H1 (cell line): ENCODE measurements at regions of chr6 and their contacts with region 1.

Region 1: DNA sequence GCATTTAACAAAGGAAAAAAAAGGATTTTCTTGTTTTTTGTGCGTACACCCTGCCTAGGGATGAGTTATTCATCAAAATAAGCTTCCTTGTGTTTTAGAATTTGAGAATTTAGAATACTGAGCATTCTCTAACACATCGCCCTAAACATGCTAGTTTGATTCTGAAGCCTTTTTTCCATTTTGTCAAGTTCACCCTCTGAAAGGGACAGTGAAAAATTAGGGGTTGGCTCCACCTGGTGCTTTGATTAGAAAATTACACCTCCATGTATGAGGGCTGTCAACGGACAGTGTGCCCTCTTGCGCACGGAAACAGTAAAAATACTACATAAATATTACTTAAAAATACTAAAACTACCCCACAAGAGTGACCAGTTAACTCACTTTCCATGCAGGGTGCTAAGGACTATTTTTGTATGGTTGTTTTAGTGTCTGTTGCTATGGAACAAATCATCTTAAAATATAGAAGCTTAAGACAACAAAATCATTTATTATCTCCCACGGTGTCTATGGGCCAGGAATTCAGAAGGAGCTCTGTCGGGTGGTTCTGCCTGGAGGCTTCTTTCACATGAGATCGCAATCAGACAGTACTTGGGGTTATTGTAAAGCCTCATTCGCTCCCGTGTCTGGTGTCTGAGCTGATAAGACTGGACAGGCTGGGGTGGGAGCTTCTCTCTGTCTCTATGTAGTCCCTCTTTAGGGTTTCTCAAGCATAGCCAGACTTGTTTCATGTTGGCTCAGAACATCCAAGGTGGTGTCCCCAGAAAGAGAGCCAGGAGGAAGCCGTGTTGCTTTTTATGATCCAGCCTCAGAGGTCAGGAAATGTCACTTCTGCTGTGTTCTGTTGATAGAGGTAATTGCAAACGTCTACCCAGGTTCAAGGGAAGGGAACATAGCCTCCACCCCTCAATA is 41.1 kb upstream of the TMEM170B start:
- DNase-seq: peak; percentile 10 to 62
- H3K4me3 ChIP-seq: no peak overlapping the region
- H3K27ac ChIP-seq: no peak overlapping the region
- H3K4me1 ChIP-seq: peaks cover 0 to 4% (median 2%) of the 10 kb centered on the region in 4 experiments; a peak in 2 of 7 replicates
- H3K27me3 ChIP-seq: no peaks in the 10 kb centered on the region
- CTCF ChIP-seq: peak; percentile 18 to 98 (median 71)
- EP300 ChIP-seq: no peak
- POLR2A ChIP-seq: no peak
- RAD21 ChIP-seq: peak; percentile 98

Region 2: GRCh38 chr6:10954590-10955010 is 541.8 kb before region 1 on chr6:
- CTCF ChIA-PET with region 1: interaction called, 12 read pairs
- POLR2A ChIA-PET with region 1: no interaction called
- DNase-seq: peak; percentile 63 to 96
- H3K4me3 ChIP-seq: no peak overlapping the region
- H3K27ac ChIP-seq: no peak overlapping the region
- H3K4me1 ChIP-seq: 0 out of 7 replicates have a peak, but pooled peaks cover 0 to 3% (median 0%) of the 10 kb centered on the region in 4 experiments
- H3K27me3 ChIP-seq: peaks cover 0 to 4% (median 0%) of the 10 kb centered on the region in 4 experiments; a peak in 2 of 7 replicates
- CTCF ChIP-seq: peak; percentile 96 to 99 (median 98)
- EP300 ChIP-seq: no peak
- POLR2A ChIP-seq: no peak
- RAD21 ChIP-seq: peak; percentile 85 to 87

Region 3: GRCh38 chr6:11155589-11155988 is 340.8 kb before region 1 on chr6:
- CTCF ChIA-PET with region 1: interaction called, 16 read pairs
- POLR2A ChIA-PET with region 1: no interaction called
- DNase-seq: no peak
- H3K4me3 ChIP-seq: no peak overlapping the region
- H3K27ac ChIP-seq: no peak overlapping the region
- H3K4me1 ChIP-seq: peaks cover 0 to 3% (median 0%) of the 10 kb centered on the region in 4 experiments; a peak in 2 of 7 replicates
- H3K27me3 ChIP-seq: no peaks in the 10 kb centered on the region
- CTCF ChIP-seq: no peak
- EP300 ChIP-seq: no peak
- POLR2A ChIP-seq: no peak
- RAD21 ChIP-seq: no peak

Region 4: DNA sequence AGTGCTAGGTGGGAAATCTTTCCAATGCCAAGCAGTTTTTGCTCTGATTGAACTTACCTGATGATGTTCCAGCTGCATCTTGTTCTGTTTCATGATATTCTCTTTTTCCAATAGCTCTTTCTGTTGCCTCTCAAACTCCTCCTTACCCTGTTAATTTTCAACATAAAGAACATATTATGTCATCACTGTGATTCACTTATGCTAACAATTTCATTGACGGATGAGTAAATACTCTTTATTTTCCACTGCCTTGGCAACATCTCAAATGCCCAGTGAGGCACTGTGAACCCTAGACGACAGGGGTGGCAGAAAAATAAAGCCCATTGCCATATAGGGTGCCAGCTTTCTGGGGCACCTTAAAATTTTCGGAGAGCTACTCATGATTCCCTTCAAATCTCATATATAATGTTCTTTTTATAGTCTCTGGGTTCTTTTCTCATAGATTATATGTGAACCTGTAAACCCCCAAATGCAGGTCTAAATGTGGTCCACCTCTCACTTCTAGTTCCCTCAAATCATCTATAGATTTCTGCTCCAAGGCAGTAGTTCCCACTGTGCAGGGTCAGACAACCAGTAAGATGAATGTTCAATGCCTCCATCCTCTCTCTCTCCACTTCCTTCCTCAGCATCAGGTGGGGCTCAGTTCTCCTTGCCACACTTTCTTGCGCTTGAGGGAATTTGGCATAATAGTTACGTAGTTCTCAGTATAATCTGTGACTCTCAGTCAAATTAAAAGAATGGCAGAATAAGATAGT is 308.1 kb before region 1 on chr6:
- CTCF ChIA-PET with region 1: interaction called, 13 read pairs
- POLR2A ChIA-PET with region 1: no interaction called
- DNase-seq: no peak
- H3K4me3 ChIP-seq: no peak overlapping the region
- H3K27ac ChIP-seq: no peak overlapping the region
- H3K4me1 ChIP-seq: peaks cover 0 to 2% (median 0%) of the 10 kb centered on the region in 4 experiments; a peak in 2 of 7 replicates
- H3K27me3 ChIP-seq: no peaks in the 10 kb centered on the region
- CTCF ChIP-seq: no peak
- EP300 ChIP-seq: no peak
- POLR2A ChIP-seq: no peak
- RAD21 ChIP-seq: no peak

Region 5: GRCh38 chr6:11432713-11433450 is 63.5 kb before region 1 on chr6:
- CTCF ChIA-PET with region 1: interaction called, 10 read pairs
- POLR2A ChIA-PET with region 1: no interaction called
- DNase-seq: no peak
- H3K4me3 ChIP-seq: no peak overlapping the region
- H3K27ac ChIP-seq: no peak overlapping the region
- H3K4me1 ChIP-seq: peaks cover 0 to 10% (median 5%) of the 10 kb centered on the region in 4 experiments; a peak in 2 of 7 replicates
- H3K27me3 ChIP-seq: no peaks in the 10 kb centered on the region
- CTCF ChIP-seq: no peak
- EP300 ChIP-seq: no peak
- POLR2A ChIP-seq: no peak
- RAD21 ChIP-seq: no peak

Region 6: GRCh38 chr6:11575408-11576033 is 79.1 kb after region 1 on chr6:
- CTCF ChIA-PET with region 1: interaction called, 17 read pairs
- POLR2A ChIA-PET with region 1: no interaction called
- DNase-seq: peak; percentile 41 to 56
- H3K4me3 ChIP-seq: no peak overlapping the region
- H3K27ac ChIP-seq: no peak overlapping the region
- H3K4me1 ChIP-seq: no peaks in the 10 kb centered on the region
- H3K27me3 ChIP-seq: no peaks in the 10 kb centered on the region
- CTCF ChIP-seq: peak; percentile 72 to 97 (median 81)
- EP300 ChIP-seq: no peak
- POLR2A ChIP-seq: no peak
- RAD21 ChIP-seq: peak; percentile 92 to 94